ENCODE measurements at regions of chr2 and their contacts with region 1.

Region 1: DNA sequence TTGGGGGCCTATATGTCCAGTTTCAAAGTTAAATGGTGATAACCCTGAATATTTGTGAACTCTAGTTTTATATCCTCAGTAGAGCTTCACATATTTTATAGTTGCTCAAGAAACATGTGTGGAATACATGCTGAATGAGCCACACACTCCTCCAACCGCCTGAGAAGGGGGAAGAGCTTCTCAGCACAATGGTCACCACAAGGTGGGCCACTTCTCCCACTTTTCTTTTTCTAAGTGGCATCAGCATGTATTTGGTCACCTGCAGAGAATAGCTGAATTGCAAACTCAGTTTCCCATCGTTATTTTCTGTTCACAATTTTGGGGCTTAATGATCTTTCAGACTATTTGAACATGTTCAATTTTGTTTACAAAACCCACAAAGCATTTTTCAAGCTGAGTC is 340.5 kb downstream of the PARD3B start:
- DNase-seq: no peak
- ATAC-seq: no peak
- H3K4me3 ChIP-seq: no peak overlapping the region
- H3K4me3 Mint-ChIP-seq: no peak overlapping the region
- H3K27ac ChIP-seq: no peak overlapping the region
- H3K27ac Mint-ChIP-seq: peak overlapping the region in 2 of 9 donors; percentile 6 to 51
- H3K4me1 ChIP-seq: peaks cover 0 to 14% of the 10 kb centered on the region in 2 donors
- H3K4me1 Mint-ChIP-seq: peaks cover 13 to 33% (median 26%) of the 10 kb centered on the region in 7 donors
- H3K27me3 ChIP-seq: no peaks in the 10 kb centered on the region
- H3K27me3 Mint-ChIP-seq: no peaks in the 10 kb centered on the region

Region 2: GRCh38 chr2:204950671-204951346 is 65.1 kb after region 1 on chr2:
- CTCF ChIA-PET with region 1: no interaction called
- POLR2A ChIA-PET with region 1: interaction called, 8 read pairs
- intact Hi-C with region 1: loop called in 1 of 2 experiments (anchors 2 kb)
- DNase-seq: no peak
- ATAC-seq: no peak
- H3K4me3 ChIP-seq: no peak overlapping the region
- H3K4me3 Mint-ChIP-seq: peak overlapping the region in 1 of 10 donors; percentile 24
- H3K27ac ChIP-seq: no peak overlapping the region
- H3K27ac Mint-ChIP-seq: peak overlapping the region in 7 of 9 donors; percentile 27 to 84 (median 73)
- H3K4me1 ChIP-seq: peaks cover 6 to 37% of the 10 kb centered on the region in 2 donors
- H3K4me1 Mint-ChIP-seq: peaks cover 30 to 76% (median 64%) of the 10 kb centered on the region in 7 donors
- H3K27me3 ChIP-seq: no peaks in the 10 kb centered on the region
- H3K27me3 Mint-ChIP-seq: no peaks in the 10 kb centered on the region

Measured in naive thymus-derived CD4-positive, alpha-beta T cell (primary cell).